Sigmoid colon (tissue), 7 donors: ENCODE measurements at regions of chr10 and their contacts with region 1.

Region 1: DNA sequence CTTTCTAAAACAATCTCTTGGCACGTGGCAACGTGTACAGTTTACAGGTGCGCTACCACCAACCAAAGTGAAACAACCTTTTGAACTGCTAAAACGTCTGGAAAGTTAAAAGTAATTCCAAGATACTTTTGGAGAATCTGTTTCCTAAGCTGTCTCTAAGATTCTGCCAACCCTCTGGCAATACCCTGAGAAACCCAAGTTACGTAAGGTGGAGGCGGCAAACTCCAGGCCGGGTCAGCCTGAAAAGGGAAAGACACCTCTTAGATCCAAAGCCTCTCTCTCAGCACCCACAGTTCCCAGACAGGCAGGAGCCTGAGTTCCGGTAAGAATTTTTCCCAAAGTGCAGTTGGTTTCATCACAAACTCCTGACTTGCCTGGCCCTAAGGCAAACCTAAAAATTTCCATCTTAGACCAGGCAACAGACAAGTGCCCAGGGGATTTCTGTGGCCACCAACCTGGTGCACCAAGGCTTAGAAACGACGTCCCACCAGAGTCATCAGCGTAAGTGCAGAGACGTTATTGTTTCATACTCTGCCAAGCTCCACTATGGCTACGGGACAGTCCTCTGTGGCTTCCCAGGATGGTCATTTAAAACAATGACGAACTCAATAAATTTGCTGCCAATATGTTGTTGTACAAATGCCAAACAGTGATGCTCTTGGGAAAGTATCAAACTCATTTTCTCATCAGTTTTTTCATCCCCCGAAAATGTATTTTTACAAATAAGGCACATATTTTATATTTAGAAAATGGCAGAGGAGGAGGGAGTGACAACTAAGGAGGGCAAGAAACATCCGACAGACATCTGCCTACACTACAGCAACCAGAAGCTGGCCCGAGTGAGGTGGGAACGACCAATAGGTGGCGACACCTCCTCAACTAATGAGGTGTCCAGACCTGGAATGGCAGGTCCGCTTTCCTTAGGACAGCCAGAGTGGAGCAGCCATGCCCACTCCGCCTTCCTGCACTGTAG is 205.8 kb upstream of the FRMD4A start:
- DNase-seq: peak; percentile 82
- H3K4me3 ChIP-seq: no peak overlapping the region
- H3K27ac ChIP-seq: no peak overlapping the region
- H3K4me1 ChIP-seq: peaks cover 0 to 5% (median 0%) of the 10 kb centered on the region in 4 donors
- H3K27me3 ChIP-seq: no peaks in the 10 kb centered on the region
- CTCF ChIP-seq: peak; percentile 40 to 64 (median 44)
- EP300 ChIP-seq: no peak
- POLR2A ChIP-seq: no peak

Region 2: DNA sequence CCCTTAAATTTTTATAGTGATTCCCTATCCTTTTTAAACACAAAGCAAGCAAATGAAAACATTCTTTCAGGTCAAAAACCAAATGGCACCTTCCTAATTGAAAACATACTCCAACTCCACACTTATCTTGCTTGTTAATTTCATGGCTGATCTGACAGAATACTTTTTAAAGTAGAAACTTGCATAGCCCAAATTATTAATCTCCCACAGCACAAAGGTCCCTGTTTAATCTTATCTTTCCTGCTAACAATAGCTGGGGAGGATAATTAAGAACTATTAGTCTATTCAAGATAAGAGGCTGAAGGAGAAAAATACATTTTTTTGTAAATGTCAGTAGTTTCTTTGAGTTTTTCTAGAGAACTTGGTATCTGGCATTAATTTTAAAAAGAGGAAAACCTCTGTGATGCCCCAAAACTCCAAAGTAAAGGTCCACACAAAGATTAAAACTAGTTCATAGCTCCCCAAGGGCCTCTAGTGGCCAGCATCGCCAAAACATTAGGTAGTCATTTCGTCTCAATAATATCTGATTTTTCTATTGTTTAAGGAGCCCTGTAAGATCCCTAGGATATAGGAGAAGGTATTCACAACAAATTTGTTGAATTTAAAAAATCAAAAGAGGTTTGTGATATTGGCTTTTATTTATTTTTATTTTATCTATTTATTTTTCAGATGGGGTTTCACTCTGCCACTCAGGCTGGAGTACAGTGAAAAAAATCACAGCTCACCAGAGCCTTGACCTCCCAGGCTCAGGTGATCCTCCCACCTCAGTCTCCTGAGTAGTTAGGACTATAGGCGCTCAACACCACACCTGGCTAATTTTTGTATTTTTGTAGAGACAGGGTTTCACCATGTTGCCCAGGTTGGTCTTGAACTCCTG is 286.6 kb after region 1 on chr10:
- intact Hi-C with region 1: loop called (anchors 5 kb)
- DNase-seq: no peak
- H3K4me3 ChIP-seq: no peak overlapping the region
- H3K27ac ChIP-seq: no peak overlapping the region
- H3K4me1 ChIP-seq: peaks cover 0 to 6% (median 0%) of the 10 kb centered on the region in 4 donors
- H3K27me3 ChIP-seq: no peaks in the 10 kb centered on the region
- CTCF ChIP-seq: peak; percentile 17 to 60 (median 47)
- EP300 ChIP-seq: no peak
- POLR2A ChIP-seq: no peak